ENCODE measurements at regions of chrX and their contacts with region 1.

Region 1: GRCh38 chrX:38768079-38768478 is 33.2 kb upstream of the MID1IP1 start:
- DNase-seq: no peak
- H3K4me3 ChIP-seq: no peak overlapping the region
- H3K27ac ChIP-seq: no peak overlapping the region
- H3K4me1 ChIP-seq: no peaks in the 10 kb centered on the region
- H3K27me3 ChIP-seq: no peaks in the 10 kb centered on the region
- CTCF ChIP-seq: peak in 5 of 6 experiments; percentile 13 to 46 (median 28)
- POLR2A ChIP-seq: no peak

Region 2: DNA sequence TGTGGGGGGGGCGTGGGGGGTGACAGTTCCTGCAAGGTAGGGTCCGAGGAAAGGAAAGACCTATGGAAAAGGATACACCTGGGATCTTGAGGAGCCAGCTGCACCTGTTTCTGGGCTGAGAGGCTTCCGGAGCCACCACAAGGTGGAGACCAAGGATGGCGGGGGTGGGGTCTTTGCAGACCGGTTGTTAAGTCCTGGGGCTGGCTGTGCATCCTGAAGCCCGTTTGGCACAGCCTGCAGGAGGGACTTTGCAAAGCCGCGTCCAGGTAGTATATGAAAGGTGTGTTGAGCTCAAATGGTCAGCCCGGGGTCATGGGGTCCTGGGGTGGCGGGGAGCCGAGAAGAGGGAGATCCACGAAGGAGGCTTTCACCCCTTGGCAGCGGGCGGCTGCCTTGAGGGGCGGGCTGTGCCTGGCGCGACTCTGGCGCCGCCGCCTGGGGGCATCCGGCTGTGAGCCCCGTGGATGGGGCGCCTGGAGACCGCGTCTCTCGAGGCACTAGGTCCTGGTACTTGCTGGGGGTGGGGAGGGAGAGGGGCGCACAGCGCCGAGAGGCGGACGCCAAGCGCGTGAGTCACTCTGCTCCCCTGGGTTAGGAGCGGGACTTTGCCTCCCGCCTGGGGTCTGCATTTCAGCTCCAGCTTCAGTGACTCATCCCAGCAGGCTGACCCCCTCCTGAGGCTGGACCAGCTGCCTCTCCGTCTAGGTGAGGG is 862.5 kb before region 1 on chrX:
- intact Hi-C with region 1: no loop called
- DNase-seq: no peak
- H3K4me3 ChIP-seq: peak overlapping the region in 1 of 4 donors; percentile 18
- H3K27ac ChIP-seq: no peak overlapping the region
- H3K4me1 ChIP-seq: peaks cover 0 to 8% (median 0%) of the 10 kb centered on the region in 3 donors
- H3K27me3 ChIP-seq: peaks cover 0 to 21% (median 0%) of the 10 kb centered on the region in 4 donors
- CTCF ChIP-seq: no peak
- POLR2A ChIP-seq: no peak

Region 3: GRCh38 chrX:39149761-39150160 is 381.7 kb after region 1 on chrX:
- intact Hi-C with region 1: loop called (anchors 10 kb)
- DNase-seq: no peak
- H3K4me3 ChIP-seq: no peak overlapping the region
- H3K27ac ChIP-seq: no peak overlapping the region
- H3K4me1 ChIP-seq: no peaks in the 10 kb centered on the region
- H3K27me3 ChIP-seq: no peaks in the 10 kb centered on the region
- CTCF ChIP-seq: peak; percentile 35 to 70 (median 63)
- POLR2A ChIP-seq: no peak

Measured in esophagus squamous epithelium (tissue), 5 donors.